ENCODE measurements at regions of chr3 and their contacts with region 1.

Region 1: DNA sequence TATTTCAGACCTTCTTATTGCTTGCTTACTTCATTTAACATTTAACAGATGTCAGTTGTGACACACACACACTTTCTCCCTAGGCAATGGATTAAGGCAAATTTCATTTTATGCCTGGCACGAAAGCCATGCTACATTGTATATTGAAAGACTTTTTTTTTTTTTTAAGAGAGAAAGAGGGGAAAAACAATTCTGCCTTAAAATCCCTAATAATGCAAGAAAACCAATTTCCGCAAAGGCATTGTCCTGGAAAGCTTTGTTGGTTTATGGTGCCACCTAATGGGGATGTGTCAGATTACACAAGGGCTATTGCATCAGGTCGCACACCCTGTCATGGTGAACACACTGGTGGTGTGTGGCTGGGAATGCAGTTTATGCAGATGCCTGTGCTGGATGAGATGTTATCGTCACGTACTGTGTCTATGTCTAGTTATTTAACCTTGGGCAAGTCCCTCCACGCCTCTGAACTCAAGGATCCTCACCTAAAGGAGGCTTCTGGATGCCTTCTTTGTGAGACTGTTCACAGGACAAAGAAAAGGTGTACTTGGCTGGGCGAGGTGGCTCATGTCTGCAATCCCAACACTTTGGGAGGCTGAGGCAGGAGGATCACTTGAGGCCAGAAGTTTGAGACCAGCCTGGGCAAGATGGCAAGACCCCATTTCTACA is 37.3 kb upstream of the RFTN1 start:
- DNase-seq: peak in 1 of 2 donors; percentile 77
- ATAC-seq: peak; percentile 68 to 91 (median 78)
- H3K4me3 ChIP-seq: peak overlapping the region in 6 of 10 donors; percentile 7 to 35 (median 26)
- H3K27ac ChIP-seq: peak overlapping the region in 6 of 10 donors; percentile 4 to 62 (median 51)
- H3K4me1 ChIP-seq: peaks cover 0 to 37% (median 17%) of the 10 kb centered on the region in 9 donors
- H3K27me3 ChIP-seq: no peaks in the 10 kb centered on the region
- CTCF ChIP-seq: peak; percentile 80 to 96 (median 91)

Region 2: DNA sequence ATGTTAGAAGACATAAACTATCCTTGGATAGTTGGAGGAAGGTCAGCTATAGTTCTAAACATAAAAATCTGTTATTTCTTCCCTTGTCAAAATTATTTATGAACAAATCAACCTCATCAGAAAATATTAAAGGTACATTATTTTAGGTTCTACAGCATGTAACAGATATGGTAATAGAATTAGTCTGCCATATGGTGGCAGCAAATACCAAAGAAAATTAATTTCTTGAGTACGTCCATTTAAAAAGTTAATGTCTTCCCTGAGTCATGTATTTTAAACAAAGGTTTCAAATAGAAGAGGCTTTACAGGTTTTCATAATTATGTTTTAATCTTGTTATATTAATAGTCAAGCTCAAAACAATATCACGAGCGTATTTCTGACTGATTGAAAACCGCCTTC is 735.1 kb before region 1 on chr3:
- intact Hi-C with region 1: loop called in 1 of 10 experiments (anchors 10 kb)
- DNase-seq: no peak
- ATAC-seq: peak in 5 of 8 donors; percentile 52 to 74 (median 69)
- H3K4me3 ChIP-seq: no peak overlapping the region
- H3K27ac ChIP-seq: no peak overlapping the region
- H3K4me1 ChIP-seq: peaks cover 0 to 23% (median 8%) of the 10 kb centered on the region in 9 donors
- H3K27me3 ChIP-seq: no peaks in the 10 kb centered on the region
- CTCF ChIP-seq: peak; percentile 5 to 77 (median 55)

Region 3: GRCh38 chr3:16060358-16060852 is 490.4 kb before region 1 on chr3:
- intact Hi-C with region 1: loop called in 2 of 10 experiments (anchors 10 kb)
- DNase-seq: no peak
- ATAC-seq: peak in 6 of 8 donors; percentile 57 to 87 (median 80)
- H3K4me3 ChIP-seq: no peak overlapping the region
- H3K27ac ChIP-seq: peak overlapping the region in 7 of 10 donors; percentile 45 to 79 (median 69)
- H3K4me1 ChIP-seq: peaks cover 0 to 47% (median 31%) of the 10 kb centered on the region in 9 donors
- H3K27me3 ChIP-seq: no peaks in the 10 kb centered on the region
- CTCF ChIP-seq: peak in 2 of 9 donors; percentile 13 to 17

Region 4: DNA sequence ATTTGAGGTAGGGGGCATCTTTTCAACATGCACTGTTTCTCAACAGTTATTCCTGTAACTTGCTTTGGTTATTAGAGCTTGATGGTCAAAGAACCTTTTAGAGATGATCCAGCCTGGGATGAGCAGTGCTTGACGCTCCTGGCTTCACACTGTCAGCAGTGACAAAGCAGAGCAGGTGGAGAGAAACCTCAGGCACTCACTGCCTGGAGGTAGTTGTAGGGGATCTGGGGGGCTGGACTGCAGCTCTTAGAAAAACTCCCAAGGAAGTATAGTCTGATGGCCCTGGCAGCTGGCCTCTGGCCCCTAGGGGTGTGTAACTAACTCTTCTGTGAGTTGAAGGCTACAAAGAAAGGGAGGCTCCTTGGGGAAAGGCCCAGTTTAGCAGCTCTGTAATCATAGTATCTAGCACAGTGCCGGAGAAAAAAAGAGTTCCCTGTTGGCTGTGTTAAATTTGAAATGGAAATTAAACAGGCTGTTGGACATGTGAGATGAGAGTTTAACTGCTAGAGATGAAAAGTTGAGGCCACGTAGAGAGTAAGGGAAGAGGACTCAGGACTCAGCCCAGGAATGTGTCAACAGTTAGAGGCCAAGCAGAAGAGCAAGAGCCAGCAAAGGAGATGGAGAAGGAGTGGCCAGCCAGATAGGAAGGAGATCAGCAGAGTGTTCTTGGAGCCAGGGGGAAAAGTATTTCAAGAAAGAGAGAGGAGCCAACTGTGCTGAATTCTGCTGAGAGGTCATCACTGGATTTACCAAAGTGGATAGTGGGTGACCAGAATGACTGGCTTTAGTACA is 271.6 kb before region 1 on chr3:
- intact Hi-C with region 1: loop called in 1 of 10 experiments (anchors 5 kb)
- DNase-seq: no peak
- ATAC-seq: no peak
- H3K4me3 ChIP-seq: no peak overlapping the region
- H3K27ac ChIP-seq: peak overlapping the region in 3 of 10 donors; percentile 7 to 64 (median 21)
- H3K4me1 ChIP-seq: peaks cover 0 to 31% (median 11%) of the 10 kb centered on the region in 9 donors
- H3K27me3 ChIP-seq: no peaks in the 10 kb centered on the region
- CTCF ChIP-seq: no peak

Region 5: DNA sequence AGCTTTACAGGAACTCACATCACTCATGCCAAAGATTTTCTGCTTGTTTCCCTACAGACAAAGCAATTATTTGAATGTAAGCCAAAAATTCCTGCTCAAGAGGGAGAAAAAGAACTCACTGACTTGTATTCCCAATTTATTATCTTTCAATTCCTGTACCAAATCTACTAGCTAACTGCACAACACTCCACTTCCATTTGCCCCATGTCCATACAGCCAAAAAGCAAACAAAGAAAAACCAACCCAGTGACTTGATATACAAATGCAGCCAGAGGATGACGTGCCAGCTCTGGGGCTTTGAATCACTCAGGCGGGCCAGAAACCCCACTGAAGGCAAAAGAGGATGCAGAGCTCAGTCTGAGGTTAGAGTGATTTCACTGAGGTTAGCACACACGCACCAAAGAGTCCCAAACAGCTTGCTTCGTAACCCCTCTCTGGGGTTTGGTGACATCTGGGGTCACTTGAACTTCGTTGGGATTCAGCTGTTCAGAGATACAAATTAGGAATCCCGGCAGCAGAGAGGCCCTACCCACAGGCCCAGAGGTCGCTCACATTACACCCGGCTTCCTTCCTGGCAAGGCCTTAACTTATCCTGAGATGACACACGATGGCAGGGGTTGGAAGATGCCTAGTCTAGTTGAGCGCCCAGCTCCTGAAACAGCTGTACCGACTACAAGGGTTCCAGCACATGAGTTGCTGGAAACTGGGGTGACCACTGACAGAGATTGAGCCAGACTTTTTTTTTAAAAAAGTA is 39.0 kb before region 1 on chr3:
- intact Hi-C with region 1: loop called in 1 of 10 experiments (anchors 2 kb)
- DNase-seq: peak; percentile 38 to 73
- ATAC-seq: peak; percentile 51 to 75 (median 56)
- H3K4me3 ChIP-seq: peak overlapping the region; percentile 57 to 96 (median 86)
- H3K27ac ChIP-seq: peak overlapping the region; percentile 86 to 96 (median 93)
- H3K4me1 ChIP-seq: peaks cover 8 to 90% (median 74%) of the 10 kb centered on the region in 9 donors
- H3K27me3 ChIP-seq: no peaks in the 10 kb centered on the region
- CTCF ChIP-seq: peak in 1 of 9 donors; percentile 15

Region 6: GRCh38 chr3:16668776-16669545 is 118.2 kb after region 1 on chr3:
- intact Hi-C with region 1: no loop called
- DNase-seq: no peak
- ATAC-seq: no peak
- H3K4me3 ChIP-seq: no peak overlapping the region
- H3K27ac ChIP-seq: no peak overlapping the region
- H3K4me1 ChIP-seq: peaks cover 0 to 13% (median 0%) of the 10 kb centered on the region in 9 donors
- H3K27me3 ChIP-seq: no peaks in the 10 kb centered on the region
- CTCF ChIP-seq: no peak